Tibial artery (tissue), 4 donors: ENCODE measurements at regions of chr7 and their contacts with region 1.

Region 1: DNA sequence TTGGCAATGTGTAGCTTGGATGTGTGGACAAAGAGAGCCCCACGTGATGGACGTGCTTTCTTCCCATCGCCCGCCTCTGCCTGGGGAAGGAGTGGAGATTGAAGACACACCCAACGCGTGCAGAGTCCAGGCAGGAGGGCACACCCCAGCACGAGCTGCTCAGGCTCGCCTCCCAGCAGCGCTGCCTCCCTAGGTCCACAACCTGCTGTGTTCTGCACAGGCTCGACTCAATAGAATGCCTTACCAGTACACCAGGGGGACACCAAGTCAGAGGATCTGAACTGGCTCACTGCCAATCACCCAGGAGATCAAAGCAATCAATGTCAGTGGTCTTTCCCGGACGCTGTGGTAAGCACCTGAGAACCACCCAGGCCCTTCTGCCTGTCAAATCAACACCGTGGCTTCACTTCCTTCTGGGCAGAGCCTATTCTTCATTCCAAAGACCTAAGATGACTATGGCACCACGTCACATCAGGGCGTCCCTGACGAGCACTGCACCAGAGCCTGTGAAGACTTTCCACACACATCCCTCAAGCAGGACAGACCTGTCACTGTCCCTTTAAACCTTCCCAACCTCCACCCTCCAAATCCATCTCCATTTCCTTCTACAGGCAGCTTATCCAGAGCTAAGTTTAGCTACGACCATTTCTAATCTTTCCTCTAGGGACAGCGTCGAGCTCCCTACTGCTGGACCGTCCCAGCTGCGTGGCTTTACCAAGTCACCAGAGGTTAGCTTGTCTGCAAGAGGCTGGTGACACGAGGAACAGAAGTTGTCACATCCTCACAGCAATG is 72.3 kb downstream of the AMZ1 start:
- DNase-seq: peak; percentile 78 to 90
- H3K4me3 ChIP-seq: peak overlapping the region; percentile 30 to 42
- H3K27ac ChIP-seq: peak overlapping the region; percentile 76 to 82
- H3K4me1 ChIP-seq: peaks cover 5 to 76% (median 61%) of the 10 kb centered on the region in 4 donors
- H3K27me3 ChIP-seq: no peaks in the 10 kb centered on the region
- CTCF ChIP-seq: peak; percentile 54 to 56

Region 2: DNA sequence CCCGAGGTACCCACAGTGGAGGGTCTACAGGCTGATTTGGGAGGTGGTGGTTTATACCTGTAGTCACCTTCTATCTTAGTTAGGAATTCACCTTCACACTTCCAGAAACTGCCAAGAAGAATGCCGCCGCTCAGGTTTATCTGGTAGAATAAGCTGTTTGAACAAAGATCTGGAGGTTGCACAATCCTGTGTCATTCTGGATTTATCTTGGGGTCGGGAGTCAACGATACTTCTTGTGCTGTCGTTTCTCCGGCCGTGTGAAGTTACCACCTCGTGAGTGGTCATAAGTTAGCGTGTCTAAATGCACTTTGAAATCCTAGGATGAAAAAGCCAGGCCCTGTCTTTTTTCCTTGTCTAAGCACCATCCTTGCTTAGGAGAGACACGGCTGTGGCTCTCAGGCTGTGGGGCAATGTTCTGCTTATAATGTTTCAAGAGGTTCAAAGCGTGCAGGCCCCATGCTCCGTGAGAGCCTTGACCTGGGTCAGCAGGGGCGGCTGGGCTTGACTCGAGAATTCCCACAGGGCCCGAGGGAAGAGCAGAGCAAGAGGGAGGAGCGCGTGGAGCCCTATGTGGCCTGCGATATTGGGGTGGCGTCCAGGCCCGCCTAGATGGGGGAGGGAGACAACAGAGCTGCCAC is 319.6 kb before region 1 on chr7:
- intact Hi-C with region 1: no loop called
- DNase-seq: no peak
- H3K4me3 ChIP-seq: no peak overlapping the region
- H3K27ac ChIP-seq: no peak overlapping the region
- H3K4me1 ChIP-seq: peaks cover 0 to 20% (median 12%) of the 10 kb centered on the region in 4 donors
- H3K27me3 ChIP-seq: no peaks in the 10 kb centered on the region
- CTCF ChIP-seq: no peak

Region 3: DNA sequence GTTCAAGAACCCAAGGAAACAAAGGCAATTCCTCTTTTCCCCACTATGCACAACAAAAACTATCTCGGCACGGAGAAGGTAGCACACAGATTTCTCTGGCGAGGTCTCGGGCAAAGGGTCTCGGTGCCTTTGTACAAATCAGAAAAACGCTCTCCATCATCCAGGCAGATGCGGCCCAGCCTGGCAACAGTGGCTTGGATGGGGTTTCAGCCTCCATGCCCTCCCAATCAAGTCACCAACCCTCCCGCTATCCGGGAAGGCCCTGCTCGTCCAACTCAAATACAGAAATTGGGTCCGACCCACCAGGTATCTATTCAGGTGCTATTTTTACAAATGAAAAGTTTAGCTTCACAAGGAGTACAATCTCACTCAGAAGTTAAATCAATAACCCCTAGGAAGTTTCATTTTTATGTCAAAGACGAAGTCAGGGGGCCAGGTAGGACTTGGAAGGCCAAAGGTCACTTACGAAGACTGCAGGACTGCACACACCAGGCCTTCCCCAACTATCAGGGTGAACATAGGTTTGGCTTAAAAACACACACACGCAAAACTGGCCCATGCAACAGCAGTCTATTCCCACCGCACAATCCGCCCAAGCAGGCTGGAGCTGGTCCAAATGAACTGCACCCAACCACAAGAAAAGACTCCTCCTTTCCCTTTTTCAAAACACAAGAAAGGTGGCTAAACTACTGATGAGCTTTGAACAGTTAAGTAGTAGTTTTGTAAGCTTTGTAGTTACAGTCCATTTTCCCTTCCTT is 40.8 kb after region 1 on chr7:
- intact Hi-C with region 1: loop called (anchors 5 kb)
- DNase-seq: peak in 1 of 2 donors; percentile 64
- H3K4me3 ChIP-seq: peak overlapping the region in 1 of 2 donors; percentile 12
- H3K27ac ChIP-seq: peak overlapping the region; percentile 66 to 69
- H3K4me1 ChIP-seq: peaks cover 0 to 45% (median 33%) of the 10 kb centered on the region in 4 donors
- H3K27me3 ChIP-seq: no peaks in the 10 kb centered on the region
- CTCF ChIP-seq: no peak

Region 4: DNA sequence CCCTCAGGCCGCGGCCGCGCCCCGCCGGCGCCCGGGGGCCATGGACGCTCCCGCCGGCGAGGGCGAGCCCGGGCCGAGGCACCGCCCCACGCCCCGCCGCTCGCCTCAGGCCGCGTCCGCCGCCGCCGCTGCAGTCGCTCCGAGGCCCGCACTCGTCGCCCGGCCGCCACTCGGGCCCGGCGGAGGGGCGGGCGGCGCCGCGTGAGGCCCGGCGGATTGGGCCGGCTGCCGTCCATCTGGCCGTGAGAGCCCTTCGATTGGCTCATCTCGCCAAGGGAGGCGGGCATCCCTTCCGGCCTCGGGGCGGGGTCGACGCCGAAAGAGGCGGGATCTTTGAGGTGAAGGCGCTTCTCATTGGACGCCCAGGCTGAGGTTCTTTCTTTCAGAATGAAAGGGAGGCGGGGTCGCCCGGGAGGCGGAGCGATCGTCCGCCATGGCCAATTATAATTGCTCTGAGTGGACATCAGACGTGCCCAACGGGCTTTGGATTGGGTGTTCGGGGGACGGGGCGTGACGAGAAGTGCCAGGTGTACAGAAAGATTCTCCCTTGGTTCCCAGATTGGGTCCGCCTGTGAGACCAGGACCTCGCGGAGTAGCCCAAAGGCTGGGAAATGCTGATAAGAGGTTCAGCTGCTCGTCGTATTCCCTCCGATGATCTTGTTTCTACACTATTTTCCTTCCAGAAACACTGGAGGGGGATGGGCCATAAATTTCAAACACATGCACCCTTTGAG is 84.0 kb after region 1 on chr7 and contains the start of gene GNA12:
- intact Hi-C with region 1: loop called (anchors 5 kb)
- DNase-seq: peak; percentile 99
- H3K4me3 ChIP-seq: peak within 1 kb of the TSS; percentile 69 to 75
- H3K27ac ChIP-seq: peak within 1 kb of the TSS; percentile 68 to 71
- H3K4me1 ChIP-seq: peaks cover 0 to 31% (median 18%) of the 10 kb centered on the region in 4 donors
- H3K27me3 ChIP-seq: no peaks in the 10 kb centered on the region
- CTCF ChIP-seq: no peak